T-cell (primary cell): ENCODE measurements at regions of chr12 and their contacts with region 1.

Region 1: DNA sequence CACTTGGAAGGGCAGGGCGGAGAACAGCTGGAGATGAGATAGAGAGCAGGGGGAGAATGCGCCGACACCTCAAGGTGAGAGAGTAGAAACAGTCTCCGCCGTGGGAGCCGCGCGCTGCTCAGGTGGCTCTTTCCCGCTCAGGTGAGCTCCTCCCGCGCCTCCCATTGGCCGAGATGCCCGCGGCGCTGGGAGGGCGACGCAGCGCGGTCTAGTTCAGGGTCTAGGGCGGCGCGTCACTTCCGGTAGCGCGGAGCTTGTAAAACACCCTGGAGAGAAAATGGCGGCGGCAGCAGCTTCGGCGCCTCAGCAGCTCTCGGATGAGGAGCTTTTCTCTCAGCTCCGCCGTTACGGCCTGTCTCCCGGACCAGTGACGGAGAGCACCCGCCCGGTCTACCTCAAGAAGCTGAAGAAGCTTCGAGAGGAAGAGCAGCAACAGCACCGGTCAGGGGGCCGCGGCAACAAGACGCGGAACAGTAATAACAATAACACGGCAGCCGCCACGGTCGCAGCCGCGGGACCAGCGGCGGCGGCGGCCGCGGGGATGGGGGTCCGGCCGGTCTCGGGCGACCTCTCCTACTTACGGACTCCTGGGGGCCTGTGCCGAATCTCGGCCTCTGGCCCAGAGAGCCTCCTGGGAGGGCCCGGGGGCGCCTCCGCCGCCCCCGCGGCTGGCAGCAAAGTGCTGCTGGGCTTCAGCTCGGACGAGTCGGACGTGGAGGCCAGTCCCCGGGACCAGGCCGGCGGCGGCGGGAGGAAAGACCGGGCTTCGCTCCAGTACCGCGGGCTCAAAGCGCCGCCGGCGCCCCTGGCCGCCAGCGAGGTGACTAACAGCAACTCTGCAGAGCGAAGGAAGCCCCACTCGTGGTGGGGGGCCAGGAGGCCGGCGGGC is at the start of gene LEMD3:
- DNase-seq: peak; percentile 85 to 98 (median 95)
- ATAC-seq: peak; percentile 94 to 98 (median 98)
- H3K4me3 ChIP-seq: peak within 1 kb of the TSS; percentile 83 to 89
- H3K4me3 Mint-ChIP-seq: peak within 1 kb of the TSS; percentile 99 to 100 (median 100)
- H3K27ac ChIP-seq: peak within 1 kb of the TSS; percentile 93
- H3K27ac Mint-ChIP-seq: peak within 1 kb of the TSS; percentile 98 to 99
- H3K4me1 ChIP-seq: peaks cover 18 to 31% of the 10 kb centered on the region in 2 experiments
- H3K4me1 Mint-ChIP-seq: peaks cover 17 to 41% (median 36%) of the 10 kb centered on the region in 3 donors
- H3K27me3 ChIP-seq: peaks cover 0 to 3% of the 10 kb centered on the region in 2 experiments
- H3K27me3 Mint-ChIP-seq: no peaks in the 10 kb centered on the region
- total RNA-seq, gene LEMD3: 57.0 to 62.9 (median 58.2) TPM

Region 2: DNA sequence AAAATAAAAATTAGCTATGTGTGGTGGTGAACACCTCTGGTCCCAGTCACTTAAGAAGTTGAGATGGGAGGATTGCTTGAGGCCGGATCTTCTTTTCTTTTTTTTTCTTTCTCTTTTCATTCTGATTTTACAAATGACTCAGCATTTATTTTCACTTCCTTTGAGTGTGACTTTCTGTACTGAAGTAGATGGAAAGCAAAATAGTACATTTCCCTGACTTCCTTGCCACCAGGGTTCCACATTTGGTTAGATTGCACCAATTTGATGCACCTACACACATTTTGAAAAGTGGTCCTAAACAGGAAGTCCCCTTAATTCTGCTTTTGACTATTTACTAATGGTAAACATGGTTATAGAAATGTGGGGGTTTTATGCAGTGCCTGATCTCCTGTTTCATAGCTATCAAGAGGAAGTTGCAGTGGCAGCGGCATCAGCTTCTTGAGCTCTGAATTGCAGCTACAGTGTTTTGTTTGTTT is 13.2 kb before region 1 on chr12:
- CTCF ChIA-PET with region 1: interaction called in 1 of 2 experiments, 15 read pairs
- POLR2A ChIA-PET with region 1: interaction called in 1 of 2 experiments, 20 read pairs
- DNase-seq: peak in 2 of 35 experiments; percentile 15 to 21
- ATAC-seq: peak; percentile 52 to 70 (median 65)
- H3K4me3 ChIP-seq: no peak overlapping the region
- H3K4me3 Mint-ChIP-seq: peak overlapping the region; percentile 1 to 42 (median 5)
- H3K27ac ChIP-seq: peak overlapping the region; percentile 25
- H3K27ac Mint-ChIP-seq: peak overlapping the region; percentile 80 to 83
- H3K4me1 ChIP-seq: peaks cover 0 to 8% of the 10 kb centered on the region in 2 experiments
- H3K4me1 Mint-ChIP-seq: peaks cover 9 to 16% (median 10%) of the 10 kb centered on the region in 3 donors
- H3K27me3 ChIP-seq: no peaks in the 10 kb centered on the region
- H3K27me3 Mint-ChIP-seq: peaks cover 19% of the 10 kb centered on the region in 2 donors

Region 3: DNA sequence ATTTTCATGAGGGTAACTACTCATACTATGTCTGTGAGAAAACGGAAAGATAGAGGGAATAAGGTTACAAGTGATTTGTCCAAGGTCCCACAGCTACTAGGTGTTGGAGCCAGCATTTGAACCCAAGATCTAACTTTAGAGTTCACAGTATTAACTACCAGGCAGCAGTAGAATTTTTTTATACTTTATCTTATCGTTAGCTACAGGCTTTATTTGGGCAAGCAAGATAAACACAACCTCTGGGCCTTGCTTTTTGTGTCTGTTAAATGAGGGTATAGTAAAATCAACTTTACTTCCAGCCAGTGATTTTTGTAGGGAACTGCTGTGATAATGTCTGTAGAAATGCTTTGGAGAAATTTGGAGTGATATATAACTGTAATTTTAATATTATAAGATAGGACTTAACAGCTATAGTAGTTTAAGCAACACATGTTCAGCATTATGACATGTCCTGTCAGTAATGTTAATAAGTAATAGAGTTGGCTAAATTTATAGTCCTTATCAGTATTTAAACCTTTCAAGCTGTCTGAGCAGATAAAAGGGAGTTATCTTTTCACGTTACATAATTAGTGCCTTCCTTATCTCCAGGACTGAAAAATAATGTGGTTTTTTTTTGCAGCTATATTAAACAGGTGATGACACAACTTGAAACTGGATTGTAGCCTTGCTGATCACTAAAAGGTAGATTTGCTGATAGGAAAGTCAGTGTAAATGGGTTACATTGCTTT is 12.6 kb after region 1 on chr12:
- CTCF ChIA-PET with region 1: interaction called, 4 to 7 read pairs
- POLR2A ChIA-PET with region 1: interaction called, 7 to 18 read pairs
- DNase-seq: no peak
- ATAC-seq: no peak
- H3K4me3 ChIP-seq: no peak overlapping the region
- H3K4me3 Mint-ChIP-seq: no peak overlapping the region
- H3K27ac ChIP-seq: no peak overlapping the region
- H3K27ac Mint-ChIP-seq: no peak overlapping the region
- H3K4me1 ChIP-seq: peaks cover 0 to 6% of the 10 kb centered on the region in 2 experiments
- H3K4me1 Mint-ChIP-seq: peaks cover 51 to 60% (median 59%) of the 10 kb centered on the region in 3 donors
- H3K27me3 ChIP-seq: no peaks in the 10 kb centered on the region
- H3K27me3 Mint-ChIP-seq: no peaks in the 10 kb centered on the region

Region 4: GRCh38 chr12:65232476-65233077 is 63.0 kb after region 1 on chr12:
- CTCF ChIA-PET with region 1: interaction called, 7 to 28 read pairs
- POLR2A ChIA-PET with region 1: interaction called in 1 of 2 experiments, 3 read pairs
- DNase-seq: peak in 1 of 35 experiments; percentile 44
- ATAC-seq: peak in 1 of 4 experiments; percentile 32
- H3K4me3 ChIP-seq: no peak overlapping the region
- H3K4me3 Mint-ChIP-seq: no peak overlapping the region
- H3K27ac ChIP-seq: no peak overlapping the region
- H3K27ac Mint-ChIP-seq: peak overlapping the region in 1 of 2 donors; percentile 31
- H3K4me1 ChIP-seq: peaks cover 0 to 2% of the 10 kb centered on the region in 2 experiments
- H3K4me1 Mint-ChIP-seq: peaks cover 5 to 11% (median 10%) of the 10 kb centered on the region in 3 donors
- H3K27me3 ChIP-seq: no peaks in the 10 kb centered on the region
- H3K27me3 Mint-ChIP-seq: no peaks in the 10 kb centered on the region

Region 5: DNA sequence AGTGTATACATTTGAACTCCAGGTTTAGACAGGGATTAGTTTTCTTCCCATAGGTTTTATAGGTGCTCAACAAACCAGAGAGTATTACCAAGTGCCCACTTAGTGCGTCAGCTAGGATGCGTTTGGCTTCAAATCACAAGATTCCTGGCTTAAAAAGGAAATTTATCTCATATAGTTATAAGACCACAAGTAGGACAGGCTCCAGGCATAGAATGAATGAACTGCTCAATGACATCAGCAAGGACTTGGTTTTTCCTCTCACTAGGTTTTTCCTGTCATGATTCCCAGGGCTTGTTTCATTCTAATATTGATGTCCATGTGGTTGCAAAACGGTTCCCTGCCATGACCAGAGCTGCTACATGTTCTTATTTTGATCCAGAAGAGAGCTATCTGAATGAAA is 1013.4 kb after region 1 on chr12:
- CTCF ChIA-PET with region 1: no interaction called
- POLR2A ChIA-PET with region 1: no interaction called
- DNase-seq: no peak
- ATAC-seq: no peak
- H3K4me3 ChIP-seq: no peak overlapping the region
- H3K4me3 Mint-ChIP-seq: no peak overlapping the region
- H3K27ac ChIP-seq: no peak overlapping the region
- H3K27ac Mint-ChIP-seq: no peak overlapping the region
- H3K4me1 ChIP-seq: no peaks in the 10 kb centered on the region
- H3K4me1 Mint-ChIP-seq: peaks cover 0 to 5% (median 3%) of the 10 kb centered on the region in 3 donors
- H3K27me3 ChIP-seq: peaks cover 0 to 10% of the 10 kb centered on the region in 2 experiments
- H3K27me3 Mint-ChIP-seq: peaks cover 42 to 49% of the 10 kb centered on the region in 2 donors